Caco-2 (cell line): ENCODE measurements at regions of chr15 and their contacts with region 1.

Region 1: GRCh38 chr15:87604857-87605446 is 651.6 kb downstream of the NTRK3 start:
- DNase-seq: peak in 1 of 2 experiments; percentile 30
- H3K4me3 ChIP-seq: no peak overlapping the region
- H3K4me3 Mint-ChIP-seq: no peak overlapping the region
- H3K27ac Mint-ChIP-seq: no peak overlapping the region
- H3K4me1 ChIP-seq: peaks cover 21% of the 10 kb centered on the region
- H3K4me1 Mint-ChIP-seq: peaks cover 28% of the 10 kb centered on the region
- H3K27me3 ChIP-seq: no peaks in the 10 kb centered on the region
- H3K27me3 Mint-ChIP-seq: no peaks in the 10 kb centered on the region
- CTCF ChIP-seq: peak; percentile 32 to 51

Region 2: GRCh38 chr15:87348746-87349145 is 256.2 kb before region 1 on chr15:
- CTCF ChIA-PET with region 1: no interaction called
- POLR2A ChIA-PET with region 1: no interaction called
- intact Hi-C with region 1: loop called (anchors 10 kb)
- DNase-seq: peak in 1 of 2 experiments; percentile 4
- H3K4me3 ChIP-seq: no peak overlapping the region
- H3K4me3 Mint-ChIP-seq: no peak overlapping the region
- H3K27ac Mint-ChIP-seq: no peak overlapping the region
- H3K4me1 ChIP-seq: 0 out of 2 replicates have a peak, but pooled peaks cover 8% of the 10 kb centered on the region
- H3K4me1 Mint-ChIP-seq: no peaks in the 10 kb centered on the region
- H3K27me3 ChIP-seq: no peaks in the 10 kb centered on the region
- H3K27me3 Mint-ChIP-seq: no peaks in the 10 kb centered on the region
- CTCF ChIP-seq: no peak

Region 3: GRCh38 chr15:87557881-87558280 is 47.1 kb before region 1 on chr15:
- CTCF ChIA-PET with region 1: no interaction called
- POLR2A ChIA-PET with region 1: no interaction called
- intact Hi-C with region 1: loop called (anchors 1 kb)
- DNase-seq: no peak
- H3K4me3 ChIP-seq: no peak overlapping the region
- H3K4me3 Mint-ChIP-seq: no peak overlapping the region
- H3K27ac Mint-ChIP-seq: no peak overlapping the region
- H3K4me1 ChIP-seq: peaks cover 13% of the 10 kb centered on the region
- H3K4me1 Mint-ChIP-seq: peaks cover 11% of the 10 kb centered on the region
- H3K27me3 ChIP-seq: no peaks in the 10 kb centered on the region
- H3K27me3 Mint-ChIP-seq: peaks cover 5% of the 10 kb centered on the region
- CTCF ChIP-seq: no peak

Region 4: GRCh38 chr15:87619161-87619960 is 14.4 kb after region 1 on chr15:
- CTCF ChIA-PET with region 1: interaction called, 7 read pairs
- POLR2A ChIA-PET with region 1: no interaction called
- intact Hi-C with region 1: loop called (anchors 1 kb)
- DNase-seq: peak; percentile 37 to 65
- H3K4me3 ChIP-seq: no peak overlapping the region
- H3K4me3 Mint-ChIP-seq: peak overlapping the region; percentile 35
- H3K27ac Mint-ChIP-seq: peak overlapping the region; percentile 51
- H3K4me1 ChIP-seq: peaks cover 32% of the 10 kb centered on the region
- H3K4me1 Mint-ChIP-seq: peaks cover 14% of the 10 kb centered on the region
- H3K27me3 ChIP-seq: no peaks in the 10 kb centered on the region
- H3K27me3 Mint-ChIP-seq: no peaks in the 10 kb centered on the region
- CTCF ChIP-seq: no peak

Region 5: DNA sequence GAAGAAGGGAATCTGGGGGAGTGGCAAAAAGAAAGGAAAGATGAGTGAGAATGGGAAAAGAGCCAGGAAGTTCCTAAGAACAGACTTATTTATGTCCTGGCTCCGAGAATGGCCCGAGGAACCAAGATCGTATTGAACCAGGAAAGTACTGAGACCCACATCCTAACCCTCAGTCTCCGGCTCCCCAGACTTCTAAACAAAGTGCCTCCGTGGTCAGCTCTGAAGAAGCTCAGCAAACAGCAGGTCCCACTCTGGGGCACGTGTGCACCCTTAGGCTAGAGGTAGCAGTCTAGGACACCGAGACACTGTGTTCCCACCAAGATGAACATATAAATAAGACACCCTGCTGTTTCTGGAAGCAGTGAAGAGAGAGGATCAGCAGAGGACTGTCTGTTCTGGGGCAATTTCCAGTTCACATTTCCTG is 344.2 kb after region 1 on chr15:
- CTCF ChIA-PET with region 1: no interaction called
- POLR2A ChIA-PET with region 1: no interaction called
- intact Hi-C with region 1: no loop called
- DNase-seq: no peak
- H3K4me3 ChIP-seq: no peak overlapping the region
- H3K4me3 Mint-ChIP-seq: no peak overlapping the region
- H3K27ac Mint-ChIP-seq: no peak overlapping the region
- H3K4me1 ChIP-seq: no peaks in the 10 kb centered on the region
- H3K4me1 Mint-ChIP-seq: no peaks in the 10 kb centered on the region
- H3K27me3 ChIP-seq: no peaks in the 10 kb centered on the region; the same call in 1 of the 2 replicates
- H3K27me3 Mint-ChIP-seq: peaks cover 31% of the 10 kb centered on the region
- CTCF ChIP-seq: no peak